ENCODE measurements at regions of chr2 and their contacts with region 1.

Region 1: GRCh38 chr2:61419129-61419528 is 51.8 kb downstream of the USP34 start:
- DNase-seq: peak in 5 of 35 experiments; percentile 11 to 34 (median 15)
- ATAC-seq: peak in 2 of 4 experiments; percentile 43 to 64
- H3K4me3 ChIP-seq: no peak overlapping the region
- H3K4me3 Mint-ChIP-seq: no peak overlapping the region
- H3K27ac ChIP-seq: no peak overlapping the region
- H3K27ac Mint-ChIP-seq: peak overlapping the region in 1 of 2 donors; percentile 49
- H3K4me1 ChIP-seq: peaks cover 14 to 24% of the 10 kb centered on the region in 2 experiments
- H3K4me1 Mint-ChIP-seq: peaks cover 57 to 70% (median 62%) of the 10 kb centered on the region in 3 donors
- H3K27me3 ChIP-seq: no peaks in the 10 kb centered on the region
- H3K27me3 Mint-ChIP-seq: no peaks in the 10 kb centered on the region

Region 2: GRCh38 chr2:61405813-61406212 is 13.3 kb before region 1 on chr2:
- CTCF ChIA-PET with region 1: interaction called, 3 to 10 read pairs
- POLR2A ChIA-PET with region 1: no interaction called
- DNase-seq: no peak
- ATAC-seq: no peak
- H3K4me3 ChIP-seq: no peak overlapping the region
- H3K4me3 Mint-ChIP-seq: no peak overlapping the region
- H3K27ac ChIP-seq: no peak overlapping the region
- H3K27ac Mint-ChIP-seq: no peak overlapping the region
- H3K4me1 ChIP-seq: no peaks in the 10 kb centered on the region
- H3K4me1 Mint-ChIP-seq: peaks cover 15 to 17% (median 16%) of the 10 kb centered on the region in 3 donors
- H3K27me3 ChIP-seq: no peaks in the 10 kb centered on the region
- H3K27me3 Mint-ChIP-seq: no peaks in the 10 kb centered on the region

Region 3: DNA sequence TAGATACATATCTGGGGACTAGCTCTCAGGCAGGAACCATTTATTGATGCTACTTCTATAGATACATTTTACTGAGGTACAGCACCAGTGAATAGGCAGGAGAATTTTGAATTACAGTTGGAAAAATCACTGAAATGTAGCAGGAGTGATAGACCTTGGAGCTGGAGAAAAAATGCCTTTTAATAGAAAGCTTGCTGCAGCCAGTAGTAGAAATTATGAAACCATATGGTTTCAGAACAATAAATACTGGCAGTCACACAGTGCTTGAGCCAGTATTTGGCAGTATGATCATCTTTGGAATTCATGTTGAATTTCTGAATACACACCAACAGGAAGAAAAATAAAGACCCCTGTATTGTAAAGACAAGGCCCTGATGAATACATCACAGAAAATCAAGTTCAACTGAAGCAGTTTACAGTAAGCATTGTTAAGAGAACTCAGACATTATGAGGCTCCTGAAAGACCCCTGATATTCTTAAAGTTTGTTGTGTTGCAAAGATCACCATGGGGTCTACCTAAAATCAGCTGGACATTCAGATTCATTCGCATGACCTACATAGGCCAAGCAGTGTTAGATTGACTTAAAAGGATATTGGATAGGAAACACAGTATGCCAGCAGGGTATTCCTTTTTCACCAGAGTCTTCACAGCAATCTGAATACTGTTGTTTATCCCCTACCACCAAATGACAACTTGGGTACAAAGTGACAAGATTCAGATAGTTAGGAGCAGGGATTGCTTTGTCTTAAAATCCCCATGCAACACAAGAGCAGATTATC is 1425.4 kb after region 1 on chr2:
- CTCF ChIA-PET with region 1: no interaction called
- POLR2A ChIA-PET with region 1: interaction called in 1 of 2 experiments, 11 read pairs
- DNase-seq: no peak
- ATAC-seq: no peak
- H3K4me3 ChIP-seq: no peak overlapping the region
- H3K4me3 Mint-ChIP-seq: no peak overlapping the region
- H3K27ac ChIP-seq: no peak overlapping the region
- H3K27ac Mint-ChIP-seq: no peak overlapping the region
- H3K4me1 ChIP-seq: no peaks in the 10 kb centered on the region
- H3K4me1 Mint-ChIP-seq: no peaks in the 10 kb centered on the region
- H3K27me3 ChIP-seq: no peaks in the 10 kb centered on the region
- H3K27me3 Mint-ChIP-seq: no peaks in the 10 kb centered on the region